Activated CD8-positive, alpha-beta memory T cell treated with anti-CD3 and anti-CD28 coated beads, Interleukin-2, amount 10 ng/mL, durations not matched to agents 7 days and 5 days (primary cell): ENCODE measurements at regions of chr20 and their contacts with region 1.

Region 1: GRCh38 chr20:57622579-57623377 is 2.6 kb upstream of the ZBP1 start:
- DNase-seq: peak; percentile 85
- ATAC-seq: no peak
- H3K4me3 Mint-ChIP-seq: no peak overlapping the region
- H3K27ac Mint-ChIP-seq: peak overlapping the region; percentile 60
- H3K4me1 Mint-ChIP-seq: peaks cover 66% of the 10 kb centered on the region
- H3K27me3 Mint-ChIP-seq: peaks cover 3% of the 10 kb centered on the region

Region 2: DNA sequence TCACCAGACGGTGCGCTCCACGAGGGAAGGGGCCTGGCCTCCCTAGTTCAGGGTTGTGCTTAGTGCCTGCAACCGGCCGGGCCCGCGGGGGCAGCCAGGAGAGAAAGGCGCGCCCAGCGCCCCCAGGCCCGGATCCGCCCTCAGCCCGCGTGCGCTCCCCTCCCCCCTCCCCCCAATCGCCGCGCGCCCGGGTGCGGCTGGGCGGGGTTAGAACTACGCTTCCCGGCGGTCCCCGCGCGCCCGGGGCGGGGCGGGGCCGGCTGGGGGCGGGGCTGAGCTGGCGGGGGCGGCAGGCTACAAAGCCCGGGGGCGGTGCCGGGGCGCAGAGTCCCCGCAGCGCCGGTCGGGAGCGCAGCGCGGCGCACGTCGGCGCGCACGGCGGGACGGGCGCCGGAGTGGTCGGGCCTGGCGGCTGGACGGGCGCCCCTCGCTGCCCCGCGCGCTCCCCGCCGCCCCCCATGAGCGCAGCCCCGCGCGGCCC is 231.7 kb before region 1 on chr20 and contains the start of gene RBM38:
- CTCF ChIA-PET with region 1: interaction called, 17 read pairs
- DNase-seq: peak; percentile 84
- ATAC-seq: peak; percentile 69
- H3K4me3 Mint-ChIP-seq: peak within 1 kb of the TSS; percentile 78
- H3K27ac Mint-ChIP-seq: peak within 1 kb of the TSS; percentile 93
- H3K4me1 Mint-ChIP-seq: peaks cover 43% of the 10 kb centered on the region
- H3K27me3 Mint-ChIP-seq: no peaks in the 10 kb centered on the region
- total RNA-seq, gene RBM38: 74.8 to 91.9 TPM

Region 3: GRCh38 chr20:57605878-57606277 is 16.9 kb before region 1 on chr20:
- CTCF ChIA-PET with region 1: interaction called, 176 read pairs
- DNase-seq: no peak
- ATAC-seq: no peak
- H3K4me3 Mint-ChIP-seq: no peak overlapping the region
- H3K27ac Mint-ChIP-seq: no peak overlapping the region
- H3K4me1 Mint-ChIP-seq: peaks cover 37% of the 10 kb centered on the region
- H3K27me3 Mint-ChIP-seq: peaks cover 9% of the 10 kb centered on the region

Region 4: GRCh38 chr20:57654363-57654997 is 31.7 kb after region 1 on chr20:
- CTCF ChIA-PET with region 1: interaction called, 120 read pairs
- DNase-seq: peak; percentile 70
- ATAC-seq: peak; percentile 81
- H3K4me3 Mint-ChIP-seq: no peak overlapping the region
- H3K27ac Mint-ChIP-seq: no peak overlapping the region
- H3K4me1 Mint-ChIP-seq: peaks cover 13% of the 10 kb centered on the region
- H3K27me3 Mint-ChIP-seq: peaks cover 2% of the 10 kb centered on the region

Region 5: GRCh38 chr20:57770847-57771628 is 148.3 kb after region 1 on chr20:
- CTCF ChIA-PET with region 1: no interaction called
- DNase-seq: no peak
- ATAC-seq: no peak
- H3K4me3 Mint-ChIP-seq: no peak overlapping the region
- H3K27ac Mint-ChIP-seq: no peak overlapping the region
- H3K4me1 Mint-ChIP-seq: peaks cover 13% of the 10 kb centered on the region
- H3K27me3 Mint-ChIP-seq: peaks cover 26% of the 10 kb centered on the region

Region 6: DNA sequence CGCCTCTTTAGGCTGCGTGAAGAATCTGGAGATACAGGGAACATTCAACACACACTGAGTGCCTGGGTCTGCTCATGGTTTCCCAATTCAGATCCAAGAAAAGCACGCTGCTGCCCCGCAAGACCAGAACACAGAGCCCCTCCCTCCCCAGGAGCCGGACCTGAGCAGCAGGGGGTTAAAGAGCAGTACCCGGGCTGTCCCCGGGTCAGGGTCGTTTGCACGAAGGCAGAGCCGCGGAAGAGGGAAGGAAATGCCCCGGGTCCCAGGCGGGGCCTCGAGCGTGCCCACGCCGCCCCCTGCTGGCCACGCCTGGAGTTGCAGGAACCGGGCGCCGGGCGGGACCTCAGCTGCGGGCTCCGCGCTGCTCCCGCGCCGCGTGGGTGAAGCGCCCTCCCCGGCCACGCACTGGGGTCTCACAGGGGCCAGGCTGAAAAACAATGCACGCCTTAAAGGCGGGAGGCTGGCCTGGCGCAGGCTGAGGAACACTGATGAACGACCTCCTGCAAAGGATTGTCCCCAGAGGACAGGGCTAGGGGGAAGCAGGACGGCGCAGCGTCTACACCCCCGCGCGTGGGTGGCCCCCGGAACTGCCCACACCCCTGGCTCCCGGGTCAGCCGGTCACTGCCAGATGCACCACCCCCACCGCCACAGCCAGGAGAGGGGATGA is 556.8 kb after region 1 on chr20:
- CTCF ChIA-PET with region 1: interaction called, 11 read pairs
- DNase-seq: peak; percentile 62
- ATAC-seq: peak; percentile 89
- H3K4me3 Mint-ChIP-seq: peak overlapping the region; percentile 40
- H3K27ac Mint-ChIP-seq: no peak overlapping the region
- H3K4me1 Mint-ChIP-seq: peaks cover 3% of the 10 kb centered on the region
- H3K27me3 Mint-ChIP-seq: peaks cover 26% of the 10 kb centered on the region